Right cardiac atrium (tissue), 5 donors: ENCODE measurements at regions of chr19 and their contacts with region 1.

Region 1: DNA sequence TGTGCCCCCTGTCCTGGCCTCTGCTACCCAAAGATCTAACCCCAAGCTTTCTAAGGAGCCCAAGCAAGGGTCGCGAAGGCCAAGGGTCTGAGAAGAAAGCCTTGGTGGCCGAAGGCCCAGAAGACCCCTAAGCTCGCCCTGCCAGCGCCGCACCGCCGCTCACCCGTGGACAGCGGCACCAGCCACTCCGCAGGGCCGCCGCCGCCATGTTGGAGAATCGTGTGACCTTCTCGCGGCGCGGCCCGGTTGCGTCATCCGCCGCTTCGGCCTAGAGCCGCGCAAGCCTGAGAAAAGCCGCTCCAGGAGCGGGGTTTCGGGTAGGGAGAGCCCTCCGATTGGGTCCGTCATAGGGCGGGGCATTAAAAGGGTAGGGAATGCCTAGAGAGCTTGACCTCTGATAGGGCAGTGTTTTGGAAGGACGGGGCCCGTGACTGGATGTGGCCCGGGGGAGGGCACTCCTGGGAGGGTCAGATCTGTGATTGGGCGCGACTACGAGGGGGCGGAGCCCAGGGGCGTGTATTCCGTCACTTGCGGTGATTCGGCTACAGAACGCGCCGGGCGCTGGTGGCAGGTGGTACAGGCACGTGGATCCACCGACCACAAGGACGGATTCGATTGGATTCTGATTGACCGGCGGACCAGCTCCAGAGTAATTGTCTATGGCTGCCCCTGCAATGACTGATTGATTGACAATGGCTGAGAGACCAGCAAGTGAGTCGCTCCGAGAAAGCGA is at the start of gene TIMM44:
- DNase-seq: peak; percentile 99
- ATAC-seq: peak; percentile 99
- H3K4me3 ChIP-seq: peak within 1 kb of the TSS; percentile 63
- H3K27ac ChIP-seq: peak within 1 kb of the TSS; percentile 91
- H3K4me1 ChIP-seq: no peaks in the 10 kb centered on the region
- H3K27me3 ChIP-seq: no peaks in the 10 kb centered on the region
- total RNA-seq, gene TIMM44: 51.1 to 88.9 (median 64.0) TPM

Region 2: GRCh38 chr19:7888145-7888825 is 55.3 kb before region 1 on chr19 and contains the start of gene LRRC8E:
- intact Hi-C with region 1: no loop called
- DNase-seq: peak in 2 of 3 donors; percentile 51 to 78
- ATAC-seq: peak; percentile 86 to 90
- H3K4me3 ChIP-seq: peak within 1 kb of the TSS; percentile 38
- H3K27ac ChIP-seq: no peak within 1 kb of the TSS
- H3K4me1 ChIP-seq: no peaks in the 10 kb centered on the region
- H3K27me3 ChIP-seq: no peaks in the 10 kb centered on the region
- total RNA-seq, gene LRRC8E: 0.93 to 1.2 (median 0.97) TPM

Region 3: DNA sequence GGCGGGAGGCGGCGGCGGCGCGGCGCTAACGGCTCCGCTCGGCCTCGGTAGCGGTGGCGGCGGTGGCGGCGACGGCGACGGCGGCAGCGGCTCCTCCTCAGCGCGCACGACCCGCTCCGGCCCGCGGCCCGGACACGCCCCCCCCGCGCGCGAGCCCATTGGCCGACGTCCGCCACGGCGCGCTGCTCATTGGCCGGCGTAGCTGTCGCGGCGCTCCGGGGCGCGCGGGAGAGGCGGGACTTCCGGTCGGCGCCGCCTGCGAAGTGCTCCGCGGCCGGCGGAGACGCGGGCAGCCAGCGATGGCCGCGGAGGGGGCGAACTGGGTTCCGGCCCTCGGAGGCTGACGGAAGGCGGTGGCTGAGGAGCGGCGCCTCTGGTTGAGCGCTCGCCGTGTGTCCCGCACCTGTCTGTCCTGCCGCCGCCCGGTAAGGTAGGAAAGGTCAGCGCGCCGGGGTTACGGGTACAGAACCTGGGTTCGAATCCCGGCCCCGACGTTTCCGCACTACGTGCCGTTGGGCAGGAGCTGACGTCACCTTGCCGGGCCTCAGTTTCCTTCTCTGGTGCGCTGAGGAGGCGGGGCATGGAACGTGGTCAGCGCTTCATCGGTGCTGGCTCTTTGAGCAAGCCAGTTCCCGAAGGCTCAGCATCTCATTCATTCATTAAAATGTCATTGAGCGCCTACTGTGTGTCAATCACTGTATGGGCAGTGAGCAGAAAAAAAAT is 62.1 kb after region 1 on chr19 and contains the start of gene ELAVL1:
- intact Hi-C with region 1: loop called in 1 of 4 experiments (anchors 10 kb)
- DNase-seq: peak; percentile 91 to 97 (median 97)
- ATAC-seq: peak; percentile 93
- H3K4me3 ChIP-seq: peak within 1 kb of the TSS; percentile 99
- H3K27ac ChIP-seq: peak within 1 kb of the TSS; percentile 84
- H3K4me1 ChIP-seq: peaks cover 13% of the 10 kb centered on the region
- H3K27me3 ChIP-seq: no peaks in the 10 kb centered on the region
- total RNA-seq, gene ELAVL1: 55.4 to 67.5 (median 64.6) TPM

Region 4: DNA sequence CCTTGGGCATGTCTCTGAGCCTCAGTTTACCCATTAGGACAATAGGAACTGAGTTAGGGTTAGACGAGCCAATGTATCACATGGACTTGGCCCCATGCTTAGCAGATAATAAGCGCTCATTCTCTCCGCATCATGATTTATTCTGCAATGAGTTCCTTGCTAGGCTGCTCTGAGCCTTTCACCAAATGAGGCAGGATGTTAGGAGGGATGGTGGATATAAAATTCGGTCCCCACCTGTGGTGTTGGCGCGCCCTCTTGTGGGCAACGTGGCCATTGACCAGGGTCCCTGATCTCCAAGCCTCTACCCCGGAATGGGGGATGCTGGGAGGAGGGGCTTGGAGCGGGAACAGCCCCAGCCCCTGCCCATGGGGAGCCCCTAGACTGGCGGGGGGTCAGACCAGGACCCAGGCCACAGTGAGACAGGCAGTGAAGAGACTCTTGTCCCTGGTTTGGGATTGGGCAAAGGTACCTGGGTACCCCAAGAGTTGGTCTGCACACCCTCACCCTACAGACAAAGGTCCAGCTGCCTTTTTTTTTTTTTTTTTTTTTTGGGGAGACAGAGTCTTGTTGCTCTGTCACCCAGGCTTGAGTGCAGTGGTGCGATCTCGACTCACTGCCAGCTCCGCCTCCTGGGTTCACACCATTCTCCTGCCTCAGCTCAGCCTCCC is 309.4 kb after region 1 on chr19:
- intact Hi-C with region 1: loop called (anchors 5 to 10 kb)
- DNase-seq: peak; percentile 80 to 93 (median 93)
- ATAC-seq: peak; percentile 71 to 76
- H3K4me3 ChIP-seq: no peak overlapping the region
- H3K27ac ChIP-seq: no peak overlapping the region
- H3K4me1 ChIP-seq: no peaks in the 10 kb centered on the region
- H3K27me3 ChIP-seq: no peaks in the 10 kb centered on the region